IMR-90 (cell line): ENCODE measurements at regions of chr2 and their contacts with region 1.

Region 1: GRCh38 chr2:207529330-207530159 is at the start of gene CREB1:
- DNase-seq: peak; percentile 98
- ATAC-seq: peak; percentile 94
- H3K4me3 ChIP-seq: peak within 1 kb of the TSS; percentile 100
- H3K27ac ChIP-seq: peak within 1 kb of the TSS; percentile 98
- H3K4me1 ChIP-seq: no peaks in the 10 kb centered on the region
- H3K27me3 ChIP-seq: no peaks in the 10 kb centered on the region
- CTCF ChIP-seq: peak; percentile 40
- POLR2A ChIP-seq: peak; percentile 98
- RAD21 ChIP-seq: peak; percentile 39
- total RNA-seq, gene CREB1: 71.9 and 94.5 TPM in 2 replicates

Region 2: DNA sequence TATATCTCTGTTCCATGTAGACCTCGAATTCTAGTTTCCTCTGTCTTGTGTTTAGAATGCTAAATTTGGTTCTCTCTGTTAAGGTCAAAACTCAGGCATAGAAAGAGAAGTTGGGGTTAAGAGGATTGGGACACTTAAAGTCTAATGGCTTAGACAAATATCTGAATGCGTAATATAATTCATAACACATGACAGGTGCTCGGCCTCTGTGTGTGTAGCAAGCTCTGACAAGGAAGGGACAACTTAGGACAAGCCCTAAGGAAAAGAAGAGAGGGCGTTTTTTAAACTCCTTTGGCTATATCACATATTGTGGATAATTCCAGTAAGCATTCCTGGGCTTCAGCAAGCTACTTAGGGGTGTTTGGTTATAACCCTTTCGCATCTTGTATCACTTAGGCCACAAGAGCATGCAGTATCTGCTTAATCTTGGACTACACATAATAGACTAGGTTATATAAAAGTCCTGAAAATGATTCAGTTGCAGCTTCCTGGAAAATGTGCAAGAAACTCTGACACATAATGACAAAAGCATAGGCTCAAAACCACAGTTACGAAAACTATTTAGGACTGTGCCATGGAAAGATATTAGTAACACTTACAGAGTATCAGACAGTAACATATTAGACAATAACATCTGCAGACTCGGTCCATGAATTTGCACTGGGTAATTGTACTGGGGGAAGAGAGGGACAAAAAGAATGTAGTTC is 15.8 kb before region 1 on chr2:
- CTCF ChIA-PET with region 1: no interaction called
- POLR2A ChIA-PET with region 1: no interaction called
- dilution Hi-C with region 1: no loop called
- in situ Hi-C with region 1: no loop called
- intact Hi-C with region 1: loop called (anchors 2 kb)
- DNase-seq: peak; percentile 96
- ATAC-seq: peak; percentile 93
- H3K4me3 ChIP-seq: no peak overlapping the region
- H3K27ac ChIP-seq: peak overlapping the region; percentile 95
- H3K4me1 ChIP-seq: peaks cover 10% of the 10 kb centered on the region
- H3K27me3 ChIP-seq: no peaks in the 10 kb centered on the region
- CTCF ChIP-seq: no peak
- POLR2A ChIP-seq: no peak
- RAD21 ChIP-seq: no peak

Region 3: GRCh38 chr2:207540431-207540830 is 10.9 kb after region 1 on chr2:
- CTCF ChIA-PET with region 1: interaction called, 4 read pairs
- POLR2A ChIA-PET with region 1: interaction called, 22 read pairs
- dilution Hi-C with region 1: no loop called
- in situ Hi-C with region 1: no loop called
- intact Hi-C with region 1: no loop called
- DNase-seq: no peak
- ATAC-seq: no peak
- H3K4me3 ChIP-seq: no peak overlapping the region
- H3K27ac ChIP-seq: no peak overlapping the region
- H3K4me1 ChIP-seq: no peaks in the 10 kb centered on the region
- H3K27me3 ChIP-seq: no peaks in the 10 kb centered on the region
- CTCF ChIP-seq: no peak
- POLR2A ChIP-seq: no peak
- RAD21 ChIP-seq: no peak

Region 4: DNA sequence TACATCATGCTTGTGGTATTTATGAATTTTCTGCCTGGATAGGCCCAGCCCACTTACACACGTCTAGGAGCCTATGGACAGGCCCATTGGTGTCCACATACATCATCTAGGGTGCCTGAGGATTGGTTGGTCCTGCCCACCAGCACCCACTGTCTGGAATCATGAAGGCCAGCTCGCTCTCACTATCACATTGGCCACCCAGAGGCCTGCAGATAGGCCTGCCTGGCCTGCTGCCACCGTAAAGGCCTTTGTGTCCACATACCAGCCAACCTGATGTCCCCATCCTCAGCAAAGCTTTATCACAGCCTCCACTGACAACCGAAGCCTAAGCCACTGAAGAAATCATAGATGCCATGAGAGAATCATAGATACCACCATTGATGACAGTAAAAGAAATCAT is 55.4 kb after region 1 on chr2:
- CTCF ChIA-PET with region 1: no interaction called
- POLR2A ChIA-PET with region 1: no interaction called
- dilution Hi-C with region 1: no loop called
- in situ Hi-C with region 1: no loop called
- intact Hi-C with region 1: no loop called
- DNase-seq: no peak
- ATAC-seq: no peak
- H3K4me3 ChIP-seq: no peak overlapping the region
- H3K27ac ChIP-seq: no peak overlapping the region
- H3K4me1 ChIP-seq: no peaks in the 10 kb centered on the region
- H3K27me3 ChIP-seq: no peaks in the 10 kb centered on the region
- CTCF ChIP-seq: no peak
- POLR2A ChIP-seq: no peak
- RAD21 ChIP-seq: no peak

Region 5: GRCh38 chr2:207710814-207711740 is 181.5 kb after region 1 on chr2 and contains the start of gene CCNYL1:
- CTCF ChIA-PET with region 1: no interaction called
- POLR2A ChIA-PET with region 1: no interaction called
- dilution Hi-C with region 1: no loop called
- in situ Hi-C with region 1: no loop called
- intact Hi-C with region 1: loop called (anchors 2 kb)
- DNase-seq: peak; percentile 99
- ATAC-seq: peak; percentile 98
- H3K4me3 ChIP-seq: peak within 1 kb of the TSS; percentile 87
- H3K27ac ChIP-seq: peak within 1 kb of the TSS; percentile 75
- H3K4me1 ChIP-seq: no peaks in the 10 kb centered on the region
- H3K27me3 ChIP-seq: no peaks in the 10 kb centered on the region
- CTCF ChIP-seq: 0 out of 2 replicates have a peak, but pooled peaks have one; percentile 10
- POLR2A ChIP-seq: peak; percentile 90
- RAD21 ChIP-seq: no peak
- total RNA-seq, gene CCNYL1: 5.4 and 6.7 TPM in 2 replicates